SK-MEL-5 (cell line): ENCODE measurements at regions of chr5 and their contacts with region 1.

Region 1: GRCh38 chr5:31921852-31922305 is 252.2 kb downstream of the GOLPH3 start:
- DNase-seq: peak; percentile 97

Region 2: GRCh38 chr5:31844615-31845353 is 77.1 kb before region 1 on chr5:
- in situ Hi-C with region 1: loop called (anchors 10 kb)
- DNase-seq: peak; percentile 34

Region 3: DNA sequence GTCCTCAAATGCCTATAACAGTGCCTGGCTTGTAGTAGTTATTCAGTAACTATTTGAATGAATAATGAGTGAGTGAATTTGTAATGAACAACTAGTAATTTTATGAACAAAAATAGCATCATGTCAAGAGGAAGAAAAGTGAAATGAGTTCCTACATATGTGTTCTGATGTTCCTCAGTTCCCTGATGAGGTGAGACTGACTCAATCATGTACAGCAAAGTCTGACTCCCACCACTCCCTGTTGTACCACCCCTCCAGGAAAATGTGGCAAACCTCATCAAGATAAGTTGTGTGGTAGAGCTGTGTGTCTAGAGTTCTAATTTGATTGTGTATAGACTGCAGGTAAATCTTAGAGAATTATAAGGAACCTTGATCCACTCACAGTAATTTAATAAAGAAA is 50.7 kb after region 1 on chr5:
- in situ Hi-C with region 1: no loop called
- DNase-seq: no peak